WTC11 (cell line): ENCODE measurements at regions of chr3 and their contacts with region 1.

Region 1: DNA sequence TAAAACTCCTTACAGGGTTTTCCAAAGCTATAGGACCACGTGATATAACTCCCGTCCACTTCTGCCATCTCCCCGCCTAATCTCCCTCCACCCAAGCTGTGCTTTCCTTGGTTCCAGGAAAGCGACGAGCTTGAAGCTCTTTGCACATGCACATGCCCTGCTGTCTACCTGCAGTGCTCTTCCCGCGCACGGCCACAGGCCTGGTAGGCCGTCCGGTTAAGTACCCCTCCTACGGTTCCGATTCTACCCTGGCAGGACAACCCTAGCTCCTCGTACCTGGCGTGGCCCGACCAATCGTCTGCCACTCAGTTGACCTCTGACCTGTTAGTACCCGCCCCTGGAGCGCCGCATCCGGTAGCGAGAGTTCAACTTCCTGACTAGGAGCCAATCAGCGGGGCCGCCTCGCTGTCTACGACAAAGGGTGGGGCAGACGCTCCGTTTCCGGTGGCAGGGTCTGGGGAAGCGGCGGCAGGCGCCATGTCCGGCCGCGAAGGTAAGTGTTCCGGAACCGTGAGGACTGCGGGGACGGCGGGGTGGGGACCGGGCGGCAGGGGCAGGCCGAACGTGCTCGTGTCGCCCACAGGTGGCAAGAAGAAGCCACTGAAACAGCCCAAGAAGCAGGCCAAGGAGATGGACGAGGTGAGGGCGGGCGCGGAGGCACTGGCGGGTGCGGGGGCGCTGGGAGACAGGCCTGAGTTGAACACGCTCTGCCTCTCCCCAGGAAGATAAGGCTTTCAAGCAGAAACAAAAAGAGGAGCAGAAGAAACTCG is at the starts of genes CCDC51 and TMA7:
- DNase-seq: peak; percentile 99
- ATAC-seq: peak; percentile 95
- H3K4me3 Mint-ChIP-seq: peak within 1 kb of the TSS; percentile 99
- H3K27ac Mint-ChIP-seq: peak within 1 kb of the TSS; percentile 99
- H3K4me1 Mint-ChIP-seq: peaks cover 17% of the 10 kb centered on the region
- H3K27me3 Mint-ChIP-seq: no peaks in the 10 kb centered on the region
- CTCF ChIP-seq: no peak
- total RNA-seq, gene CCDC51: 23.9 to 25.1 TPM (median 24.7 TPM) in 3 replicates
- total RNA-seq, gene TMA7: 281 to 318 TPM (median 285 TPM) in 3 replicates

Region 2: DNA sequence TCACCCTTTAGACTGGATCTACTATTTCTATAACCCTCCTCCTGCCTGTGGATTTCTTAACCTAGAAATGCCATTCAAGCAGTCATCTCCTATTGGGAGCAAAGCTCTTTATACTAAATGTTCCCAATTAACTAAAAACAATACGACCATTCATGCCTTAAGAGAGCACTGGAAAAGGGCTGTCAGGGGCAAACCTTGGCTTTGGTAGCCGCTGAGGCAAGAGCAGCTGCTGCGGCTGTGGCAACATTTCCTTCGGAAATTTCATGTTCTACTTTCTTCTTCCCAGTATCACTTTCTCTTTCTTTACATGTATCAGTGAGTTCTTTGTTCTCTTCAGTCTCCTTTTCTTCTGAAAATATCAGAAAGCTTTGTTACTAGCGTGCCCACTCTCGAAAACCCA is 805.0 kb before region 1 on chr3:
- CTCF ChIA-PET with region 1: no interaction called
- POLR2A ChIA-PET with region 1: no interaction called
- DNase-seq: no peak
- ATAC-seq: no peak
- H3K4me3 Mint-ChIP-seq: no peak overlapping the region
- H3K27ac Mint-ChIP-seq: no peak overlapping the region
- H3K4me1 Mint-ChIP-seq: no peaks in the 10 kb centered on the region
- H3K27me3 Mint-ChIP-seq: no peaks in the 10 kb centered on the region
- CTCF ChIP-seq: no peak

Region 3: GRCh38 chr3:48240711-48241491 is 199.1 kb before region 1 on chr3 and contains the start of gene ZNF589:
- CTCF ChIA-PET with region 1: interaction called, 36 read pairs
- POLR2A ChIA-PET with region 1: interaction called, 3 read pairs
- DNase-seq: peak; percentile 95
- ATAC-seq: peak; percentile 87
- H3K4me3 Mint-ChIP-seq: peak within 1 kb of the TSS; percentile 86
- H3K27ac Mint-ChIP-seq: peak within 1 kb of the TSS; percentile 90
- H3K4me1 Mint-ChIP-seq: peaks cover 41% of the 10 kb centered on the region
- H3K27me3 Mint-ChIP-seq: no peaks in the 10 kb centered on the region
- CTCF ChIP-seq: no peak
- total RNA-seq, gene ZNF589: 96.1 to 104 TPM (median 102 TPM) in 3 replicates

Region 4: GRCh38 chr3:48318783-48319468 is 121.1 kb before region 1 on chr3:
- CTCF ChIA-PET with region 1: interaction called, 12 read pairs
- POLR2A ChIA-PET with region 1: no interaction called
- DNase-seq: no peak
- ATAC-seq: no peak
- H3K4me3 Mint-ChIP-seq: no peak overlapping the region
- H3K27ac Mint-ChIP-seq: no peak overlapping the region
- H3K4me1 Mint-ChIP-seq: no peaks in the 10 kb centered on the region
- H3K27me3 Mint-ChIP-seq: peaks cover 47% of the 10 kb centered on the region
- CTCF ChIP-seq: no peak

Region 5: GRCh38 chr3:48408823-48409281 is 31.2 kb before region 1 on chr3:
- CTCF ChIA-PET with region 1: interaction called, 378 read pairs
- POLR2A ChIA-PET with region 1: no interaction called
- DNase-seq: peak; percentile 32
- ATAC-seq: peak; percentile 46
- H3K4me3 Mint-ChIP-seq: no peak overlapping the region
- H3K27ac Mint-ChIP-seq: no peak overlapping the region
- H3K4me1 Mint-ChIP-seq: no peaks in the 10 kb centered on the region
- H3K27me3 Mint-ChIP-seq: no peaks in the 10 kb centered on the region
- CTCF ChIP-seq: no peak

Region 6: DNA sequence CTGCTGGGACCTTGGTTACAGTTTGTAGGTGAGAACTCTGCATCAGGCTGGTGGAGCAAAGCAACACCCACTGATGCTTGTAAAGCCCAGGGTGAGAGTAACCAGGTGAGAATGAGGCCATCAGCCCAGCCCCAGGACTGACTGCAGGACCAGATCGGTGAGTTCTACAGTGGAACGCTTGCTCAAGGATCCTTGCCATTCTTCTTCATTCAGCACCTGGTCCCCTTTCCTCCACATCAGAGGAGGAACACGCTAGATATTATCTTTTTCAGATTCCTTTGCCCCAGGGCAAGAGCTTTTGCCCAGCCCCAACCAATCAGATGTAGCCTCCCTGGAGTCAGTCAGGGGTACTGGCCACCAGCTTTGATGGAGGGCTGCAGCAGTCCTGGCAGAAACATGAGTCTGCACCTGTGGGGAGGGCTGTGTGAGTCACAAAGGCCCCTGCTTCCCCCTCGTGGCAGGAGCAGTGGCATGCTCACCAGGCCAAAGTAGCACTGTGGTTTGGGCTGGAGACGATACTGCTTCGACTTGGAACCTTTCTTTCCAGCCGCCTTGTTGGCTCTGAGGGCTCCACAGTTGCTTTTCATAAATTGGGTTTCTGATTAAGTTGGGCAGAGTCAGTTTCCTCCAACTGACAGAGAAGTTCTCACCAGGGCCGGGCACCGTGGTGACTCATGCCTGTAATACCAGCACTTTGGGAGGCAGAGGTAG is 67.5 kb after region 1 on chr3:
- CTCF ChIA-PET with region 1: interaction called, 32 read pairs
- POLR2A ChIA-PET with region 1: interaction called, 4 read pairs
- DNase-seq: peak; percentile 84
- ATAC-seq: peak; percentile 85
- H3K4me3 Mint-ChIP-seq: no peak overlapping the region
- H3K27ac Mint-ChIP-seq: peak overlapping the region; percentile 90
- H3K4me1 Mint-ChIP-seq: peaks cover 36% of the 10 kb centered on the region
- H3K27me3 Mint-ChIP-seq: no peaks in the 10 kb centered on the region; the same call in none of the 2 replicates
- CTCF ChIP-seq: 0 out of 2 replicates have a peak, but pooled peaks have one; percentile 17

Region 7: GRCh38 chr3:48609088-48610005 is 169.3 kb after region 1 on chr3 and contains the start of gene UQCRC1:
- CTCF ChIA-PET with region 1: interaction called, 11 read pairs
- POLR2A ChIA-PET with region 1: no interaction called
- DNase-seq: peak; percentile 95
- ATAC-seq: peak; percentile 99
- H3K4me3 Mint-ChIP-seq: peak within 1 kb of the TSS; percentile 95
- H3K27ac Mint-ChIP-seq: peak within 1 kb of the TSS; percentile 94
- H3K4me1 Mint-ChIP-seq: peaks cover 11% of the 10 kb centered on the region
- H3K27me3 Mint-ChIP-seq: no peaks in the 10 kb centered on the region
- CTCF ChIP-seq: peak; percentile 39; the same call in 1 of the 2 replicates
- total RNA-seq, gene UQCRC1: 313 to 326 TPM (median 323 TPM) in 3 replicates